AG04449 (cell line): ENCODE measurements at regions of chr14 and their contacts with region 1.

Region 1: GRCh38 chr14:74612350-74613021 is 449 bp upstream of the LTBP2 start:
- DNase-seq: no peak
- H3K4me3 ChIP-seq: peak overlapping the region; percentile 67
- CTCF ChIP-seq: peak; percentile 73

Region 2: GRCh38 chr14:74389980-74390379 is 222.5 kb before region 1 on chr14:
- CTCF ChIA-PET with region 1: no interaction called
- POLR2A ChIA-PET with region 1: no interaction called
- DNase-seq: no peak
- H3K4me3 ChIP-seq: no peak overlapping the region
- CTCF ChIP-seq: no peak

Region 3: GRCh38 chr14:74493343-74494261 is 118.9 kb before region 1 on chr14 and contains the start of gene ISCA2:
- CTCF ChIA-PET with region 1: interaction called, 14 read pairs
- POLR2A ChIA-PET with region 1: no interaction called
- DNase-seq: peak; percentile 93
- H3K4me3 ChIP-seq: peak within 1 kb of the TSS; percentile 99
- CTCF ChIP-seq: no peak

Region 4: DNA sequence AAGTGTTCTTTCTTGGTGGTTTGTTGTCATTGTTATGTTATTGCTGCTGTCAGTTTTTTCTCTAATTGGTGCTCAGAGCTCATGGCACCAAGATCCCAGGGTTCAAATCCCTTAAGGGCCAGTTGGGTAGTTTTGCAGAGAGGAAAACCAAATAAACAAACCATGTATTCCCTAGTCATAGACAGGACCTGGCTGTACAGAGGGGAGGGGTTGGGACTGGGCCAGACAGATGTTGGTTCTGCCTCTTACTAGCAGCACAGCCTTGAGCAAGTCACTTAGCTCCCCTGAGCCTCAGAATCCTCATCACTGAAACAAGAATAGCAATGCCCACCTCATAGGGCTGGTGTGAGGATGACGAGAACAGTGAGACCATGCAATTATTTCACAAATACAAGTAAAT is 53.8 kb before region 1 on chr14:
- CTCF ChIA-PET with region 1: no interaction called
- POLR2A ChIA-PET with region 1: no interaction called
- DNase-seq: no peak
- H3K4me3 ChIP-seq: no peak overlapping the region
- CTCF ChIP-seq: no peak

Region 5: GRCh38 chr14:74579447-74580274 is 32.8 kb before region 1 on chr14:
- CTCF ChIA-PET with region 1: interaction called, 65 read pairs
- POLR2A ChIA-PET with region 1: no interaction called
- DNase-seq: peak; percentile 56
- H3K4me3 ChIP-seq: no peak overlapping the region
- CTCF ChIP-seq: no peak

Region 6: DNA sequence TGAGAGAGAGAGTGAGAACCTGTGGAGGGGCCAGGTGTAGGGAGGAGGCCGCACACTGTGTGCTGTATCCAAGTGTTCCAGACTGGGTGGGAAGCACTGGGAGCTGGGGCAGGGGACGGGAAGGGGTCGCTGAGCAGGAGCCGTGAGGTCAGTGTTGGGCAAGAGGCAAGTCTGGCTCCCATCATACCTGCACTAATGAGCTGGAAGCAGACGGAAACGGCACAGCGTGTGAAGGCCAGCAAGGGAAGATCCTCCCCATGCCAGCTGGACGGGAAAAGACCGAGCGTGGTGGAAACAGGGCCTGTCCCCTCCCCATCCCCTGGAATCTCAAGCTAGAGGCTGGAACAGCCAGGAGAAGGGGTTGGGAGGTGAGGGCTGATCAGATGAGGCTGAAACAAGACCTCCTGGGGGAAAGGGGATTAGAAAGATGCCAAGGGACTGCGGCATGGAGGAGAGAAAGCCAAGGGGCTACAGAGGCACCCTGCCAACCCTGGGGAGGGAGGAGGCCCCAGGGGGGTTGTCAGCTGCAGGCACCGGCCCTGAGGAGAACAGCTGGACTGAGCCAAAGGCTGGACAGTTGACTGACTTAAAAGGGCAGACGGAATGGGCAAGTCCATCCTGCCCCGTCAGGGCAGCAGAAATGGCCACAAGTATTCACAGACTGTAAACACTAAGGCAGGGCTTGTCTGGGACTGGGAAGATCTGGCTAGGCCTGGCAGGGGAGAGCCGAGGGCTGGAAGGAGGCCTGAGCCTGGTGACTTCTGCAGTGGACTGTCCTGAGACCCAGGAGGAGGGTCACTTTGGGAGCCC is 18.6 kb after region 1 on chr14:
- CTCF ChIA-PET with region 1: interaction called, 106 read pairs
- POLR2A ChIA-PET with region 1: interaction called, 9 read pairs
- DNase-seq: no peak
- H3K4me3 ChIP-seq: no peak overlapping the region
- CTCF ChIP-seq: no peak

Region 7: GRCh38 chr14:74663884-74664283 is 51.4 kb after region 1 on chr14:
- CTCF ChIA-PET with region 1: interaction called, 66 read pairs
- POLR2A ChIA-PET with region 1: no interaction called
- DNase-seq: no peak
- H3K4me3 ChIP-seq: no peak overlapping the region
- CTCF ChIP-seq: no peak

Region 8: DNA sequence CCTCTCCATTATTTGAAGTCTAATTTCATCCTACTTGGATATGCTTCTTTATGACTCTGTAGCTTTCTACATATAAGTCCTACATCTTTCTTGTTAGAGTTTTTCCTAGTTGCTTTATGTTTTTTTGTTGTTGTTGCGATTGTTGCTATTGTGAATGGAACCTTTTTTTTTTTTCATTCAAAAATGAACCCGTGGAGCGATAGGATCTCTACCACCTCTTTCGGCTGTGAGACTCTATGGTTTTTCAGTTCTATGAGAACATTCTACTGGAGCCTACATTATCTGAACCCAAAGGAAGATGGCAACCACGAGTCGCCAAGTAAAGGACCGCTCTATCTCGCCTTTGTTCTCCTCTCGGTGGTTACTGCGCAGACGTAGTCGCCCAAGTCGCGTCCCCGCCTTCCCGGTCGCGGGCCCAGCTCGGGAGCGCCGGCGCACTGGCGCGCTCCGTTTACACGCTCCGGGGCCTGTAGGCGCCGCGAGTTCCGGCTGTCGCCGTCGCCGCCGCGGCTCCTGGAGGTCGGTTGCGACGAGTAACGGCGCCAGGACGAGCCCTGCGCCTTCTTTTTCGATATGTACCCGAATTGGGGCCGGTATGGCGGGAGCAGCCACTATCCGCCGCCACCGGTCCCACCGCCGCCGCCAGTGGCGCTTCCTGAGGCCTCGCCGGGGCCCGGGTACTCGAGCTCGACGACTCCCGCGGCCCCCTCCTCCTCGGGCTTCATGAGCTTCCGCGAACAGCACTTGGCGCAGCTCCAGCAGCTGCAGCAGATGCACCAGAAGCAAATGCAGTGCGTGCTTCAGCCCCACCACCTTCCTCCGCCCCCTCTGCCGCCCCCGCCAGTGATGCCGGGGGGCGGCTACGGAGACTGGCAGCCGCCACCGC is 150.7 kb after region 1 on chr14 and contains the start of gene YLPM1:
- CTCF ChIA-PET with region 1: interaction called, 60 read pairs
- POLR2A ChIA-PET with region 1: interaction called, 6 read pairs
- DNase-seq: peak; percentile 86
- H3K4me3 ChIP-seq: peak within 1 kb of the TSS; percentile 74
- CTCF ChIP-seq: peak; percentile 76

Region 9: DNA sequence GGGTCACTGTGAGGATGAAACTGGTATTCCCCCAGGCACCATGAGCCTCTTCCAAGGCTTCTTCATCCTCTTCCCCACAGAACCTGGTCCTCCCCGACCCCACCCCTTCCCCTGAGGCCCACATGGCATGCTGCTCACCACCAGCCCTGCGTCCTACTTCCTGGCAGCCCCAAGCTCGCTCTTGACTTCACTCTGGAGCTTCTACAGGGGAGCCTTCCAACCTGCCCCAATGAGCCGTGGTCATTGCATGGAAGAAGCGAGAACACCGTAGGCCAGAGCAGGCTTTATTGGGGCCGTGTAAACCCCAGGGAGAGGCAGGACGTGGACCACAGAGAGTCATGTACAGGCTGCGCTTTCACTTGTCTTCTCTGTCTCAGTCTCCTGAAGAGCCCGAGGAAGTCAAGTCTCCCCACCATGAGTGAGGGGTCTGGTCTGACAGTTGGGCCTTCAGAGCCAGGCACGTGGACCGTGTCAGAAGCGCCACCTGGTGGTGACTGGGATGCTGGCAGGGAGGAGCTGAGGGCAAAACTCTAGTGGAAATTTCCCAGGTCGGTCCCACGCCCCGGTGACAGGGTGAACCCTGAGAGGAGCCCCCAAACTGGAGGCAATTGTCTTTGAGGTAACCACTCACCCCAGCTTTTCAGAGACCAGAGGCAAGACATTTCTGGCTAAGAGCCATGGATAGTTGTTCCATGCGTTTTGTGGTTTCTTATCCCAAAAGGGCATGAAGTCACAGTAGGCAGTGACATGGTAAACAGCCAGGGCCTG is 293.1 kb after region 1 on chr14:
- CTCF ChIA-PET with region 1: interaction called, 22 read pairs
- POLR2A ChIA-PET with region 1: no interaction called
- DNase-seq: no peak
- H3K4me3 ChIP-seq: no peak overlapping the region
- CTCF ChIP-seq: peak; percentile 94